ENCODE measurements at regions of chr11 and their contacts with region 1.

Region 1: GRCh38 chr11:62427630-62428233 is 8.9 kb downstream of the SCGB1A1 start:
- DNase-seq: no peak
- H3K4me3 ChIP-seq: no peak overlapping the region
- H3K27ac ChIP-seq: no peak overlapping the region
- H3K4me1 ChIP-seq: peaks cover 2% of the 10 kb centered on the region
- H3K27me3 ChIP-seq: no peaks in the 10 kb centered on the region
- CTCF ChIP-seq: no peak
- EP300 ChIP-seq: no peak
- POLR2A ChIP-seq: no peak

Region 2: GRCh38 chr11:60485986-60486385 is 1941.7 kb before region 1 on chr11:
- intact Hi-C with region 1: no loop called
- DNase-seq: no peak
- H3K4me3 ChIP-seq: no peak overlapping the region
- H3K27ac ChIP-seq: no peak overlapping the region
- H3K4me1 ChIP-seq: no peaks in the 10 kb centered on the region
- H3K27me3 ChIP-seq: no peaks in the 10 kb centered on the region
- CTCF ChIP-seq: no peak
- EP300 ChIP-seq: no peak
- POLR2A ChIP-seq: no peak

Region 3: GRCh38 chr11:62542750-62543567 is 115.2 kb after region 1 on chr11:
- intact Hi-C with region 1: loop called (anchors 2 to 5 kb)
- DNase-seq: peak; percentile 75 to 86 (median 84)
- H3K4me3 ChIP-seq: peak overlapping the region; percentile 99
- H3K27ac ChIP-seq: peak overlapping the region; percentile 68 to 94
- H3K4me1 ChIP-seq: peaks cover 47% of the 10 kb centered on the region
- H3K27me3 ChIP-seq: no peaks in the 10 kb centered on the region
- CTCF ChIP-seq: peak; percentile 96 to 98 (median 98)
- EP300 ChIP-seq: no peak
- POLR2A ChIP-seq: no peak

Region 4: GRCh38 chr11:62694455-62695167 is 266.9 kb after region 1 on chr11:
- intact Hi-C with region 1: loop called in 1 of 4 experiments (anchors 10 kb)
- DNase-seq: peak; percentile 76 to 87 (median 79)
- H3K4me3 ChIP-seq: no peak overlapping the region
- H3K27ac ChIP-seq: no peak overlapping the region
- H3K4me1 ChIP-seq: peaks cover 2% of the 10 kb centered on the region
- H3K27me3 ChIP-seq: no peaks in the 10 kb centered on the region
- CTCF ChIP-seq: peak; percentile 56 to 65 (median 59)
- EP300 ChIP-seq: no peak
- POLR2A ChIP-seq: no peak